ENCODE measurements at regions of chr5 and their contacts with region 1.

Region 1: GRCh38 chr5:172052450-172053236 is 46.2 kb upstream of the FBXW11 start:
- DNase-seq: no peak
- H3K4me3 ChIP-seq: no peak overlapping the region
- H3K27ac ChIP-seq: no peak overlapping the region
- H3K4me1 ChIP-seq: peaks cover 0 to 7% (median 0%) of the 10 kb centered on the region in 4 experiments; a peak in 2 of 7 replicates
- H3K27me3 ChIP-seq: no peaks in the 10 kb centered on the region
- CTCF ChIP-seq: peak in 1 of 3 experiments; percentile 19; a peak in 1 of 4 replicates
- EP300 ChIP-seq: no peak
- POLR2A ChIP-seq: no peak
- RAD21 ChIP-seq: peak in 1 of 2 experiments; percentile 9; a peak in 1 of 4 replicates

Region 2: GRCh38 chr5:172065501-172065990 is 12.9 kb after region 1 on chr5:
- CTCF ChIA-PET with region 1: interaction called, 51 read pairs
- POLR2A ChIA-PET with region 1: interaction called, 3 read pairs
- DNase-seq: no peak
- H3K4me3 ChIP-seq: no peak overlapping the region
- H3K27ac ChIP-seq: no peak overlapping the region
- H3K4me1 ChIP-seq: peaks cover 0 to 5% (median 0%) of the 10 kb centered on the region in 4 experiments; a peak in 4 of 7 replicates
- H3K27me3 ChIP-seq: no peaks in the 10 kb centered on the region
- CTCF ChIP-seq: no peak
- EP300 ChIP-seq: no peak
- POLR2A ChIP-seq: no peak
- RAD21 ChIP-seq: no peak

Measured in H1 (cell line).